ENCODE measurements at regions of chr14 and their contacts with region 1.

Region 1: DNA sequence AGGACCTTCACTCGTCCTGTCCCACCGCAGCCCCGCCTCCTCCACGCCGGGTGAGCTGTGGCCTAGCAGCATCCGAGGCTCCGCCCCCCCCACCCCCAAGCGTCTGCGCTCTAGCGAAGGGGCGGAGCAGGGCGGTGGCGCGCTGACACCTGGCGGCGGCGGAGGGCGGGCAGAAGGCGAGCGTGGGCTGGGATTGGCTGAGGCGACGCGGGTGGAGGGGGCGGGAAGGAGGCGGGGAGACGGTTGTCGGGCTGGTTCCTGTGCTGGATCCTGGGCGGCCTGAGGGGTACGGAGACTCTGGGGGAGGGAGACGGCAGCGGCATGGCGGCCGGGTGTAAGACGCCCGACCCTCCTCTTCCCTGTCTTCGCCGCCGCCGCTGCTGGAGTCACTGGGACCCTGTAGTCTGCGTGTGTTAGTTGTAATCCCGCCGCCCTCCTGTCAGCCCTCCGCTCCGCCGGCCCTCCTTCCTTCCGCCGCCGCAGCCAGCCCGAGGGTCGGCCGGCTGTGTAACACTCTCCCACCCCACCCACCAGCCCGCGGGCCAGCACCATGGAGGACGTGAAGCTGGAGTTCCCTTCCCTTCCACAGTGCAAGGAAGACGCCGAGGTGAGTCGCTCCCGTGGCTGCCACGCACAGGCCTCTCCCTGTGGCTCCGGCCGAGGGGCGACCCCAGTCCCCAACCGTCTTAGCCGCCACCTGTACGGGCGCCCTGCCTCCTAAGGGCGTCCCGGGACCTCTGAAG is at the start of gene STYX:
- DNase-seq: peak; percentile 100
- ATAC-seq: peak; percentile 95
- H3K4me3 Mint-ChIP-seq: peak within 1 kb of the TSS; percentile 99
- H3K27ac Mint-ChIP-seq: peak within 1 kb of the TSS; percentile 100
- H3K4me1 Mint-ChIP-seq: peaks cover 40% of the 10 kb centered on the region
- H3K27me3 Mint-ChIP-seq: no peaks in the 10 kb centered on the region
- CTCF ChIP-seq: no peak
- total RNA-seq, gene STYX: 21.1 to 22.8 TPM (median 21.4 TPM) in 3 replicates

Region 2: GRCh38 chr14:52552063-52552988 is 177.8 kb before region 1 on chr14 and contains the starts of genes GPR137C and TXNDC16:
- CTCF ChIA-PET with region 1: interaction called, 3 read pairs
- POLR2A ChIA-PET with region 1: interaction called, 11 read pairs
- DNase-seq: peak; percentile 100
- ATAC-seq: peak; percentile 91
- H3K4me3 Mint-ChIP-seq: peak within 1 kb of the TSS; percentile 92
- H3K27ac Mint-ChIP-seq: peak within 1 kb of the TSS; percentile 87
- H3K4me1 Mint-ChIP-seq: peaks cover 18% of the 10 kb centered on the region
- H3K27me3 Mint-ChIP-seq: peaks cover 12% of the 10 kb centered on the region
- CTCF ChIP-seq: no peak
- total RNA-seq, gene GPR137C: 2.7 to 4.1 TPM (median 4.0 TPM) in 3 replicates
- total RNA-seq, gene TXNDC16: 10.9 to 11.4 TPM (median 11.3 TPM) in 3 replicates

Region 3: DNA sequence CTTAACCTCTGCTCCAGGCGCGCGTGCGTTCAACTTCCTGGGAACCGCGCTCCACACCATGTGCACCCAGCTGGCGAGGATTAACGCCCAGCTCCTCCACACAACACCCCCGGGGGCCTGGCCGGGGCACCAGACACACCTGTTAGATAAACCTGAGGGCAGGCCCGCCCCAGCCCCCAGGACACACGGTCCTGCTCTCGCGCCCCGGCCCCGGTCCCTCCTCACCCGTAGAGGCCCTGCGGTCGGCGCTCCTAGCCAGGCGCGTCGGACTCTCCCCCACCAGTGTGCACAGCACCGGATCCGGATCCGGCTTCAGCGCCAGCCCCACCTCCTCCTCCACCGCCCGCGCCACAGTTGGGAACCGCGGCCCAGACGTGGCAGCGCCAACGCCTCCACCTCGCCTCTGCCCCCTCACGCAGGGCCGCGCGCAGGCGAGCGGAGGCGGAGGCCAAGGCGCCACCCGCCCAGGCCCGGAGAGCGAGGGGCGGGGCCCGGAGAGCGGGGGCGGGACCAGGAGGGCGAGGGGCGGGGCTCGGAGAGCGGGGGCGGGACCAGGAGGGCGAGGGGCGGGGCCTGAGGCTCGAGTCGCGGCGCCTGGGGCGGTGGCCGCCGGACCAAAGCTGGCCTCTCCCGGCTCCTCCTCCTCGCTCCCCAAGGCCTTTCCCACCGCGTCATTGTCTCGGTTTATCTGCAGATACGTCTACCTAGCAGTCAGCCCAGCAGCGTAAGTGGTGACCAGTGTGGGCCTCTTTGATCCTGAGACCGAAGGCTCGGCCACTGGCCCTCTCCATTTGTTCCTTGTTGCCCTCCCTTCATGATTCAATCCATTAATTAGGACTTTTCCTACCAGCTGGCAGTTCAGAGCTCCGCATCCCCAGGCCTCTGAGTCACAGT is 61.4 kb after region 1 on chr14 and contains the start of gene GNPNAT1:
- CTCF ChIA-PET with region 1: no interaction called
- POLR2A ChIA-PET with region 1: interaction called, 19 read pairs
- DNase-seq: peak; percentile 88
- ATAC-seq: peak; percentile 90
- H3K4me3 Mint-ChIP-seq: peak within 1 kb of the TSS; percentile 91
- H3K27ac Mint-ChIP-seq: peak within 1 kb of the TSS; percentile 99
- H3K4me1 Mint-ChIP-seq: peaks cover 22% of the 10 kb centered on the region
- H3K27me3 Mint-ChIP-seq: no peaks in the 10 kb centered on the region
- CTCF ChIP-seq: no peak
- total RNA-seq, gene GNPNAT1: 39.5 to 43.5 TPM (median 43.5 TPM) in 3 replicates

Measured in WTC11 (cell line).